ENCODE measurements at regions of chr12 and their contacts with region 1.

Region 1: GRCh38 chr12:3073438-3074250 is 3.5 kb upstream of the TSPAN9 start:
- DNase-seq: peak; percentile 79 to 95 (median 85)
- H3K4me3 ChIP-seq: no peak overlapping the region
- H3K27ac ChIP-seq: peak overlapping the region in 1 of 5 donors; percentile 17
- H3K4me1 ChIP-seq: peaks cover 5 to 16% of the 10 kb centered on the region in 2 donors
- H3K27me3 ChIP-seq: no peaks in the 10 kb centered on the region
- CTCF ChIP-seq: peak; percentile 93 to 99 (median 96)
- POLR2A ChIP-seq: no peak

Region 2: DNA sequence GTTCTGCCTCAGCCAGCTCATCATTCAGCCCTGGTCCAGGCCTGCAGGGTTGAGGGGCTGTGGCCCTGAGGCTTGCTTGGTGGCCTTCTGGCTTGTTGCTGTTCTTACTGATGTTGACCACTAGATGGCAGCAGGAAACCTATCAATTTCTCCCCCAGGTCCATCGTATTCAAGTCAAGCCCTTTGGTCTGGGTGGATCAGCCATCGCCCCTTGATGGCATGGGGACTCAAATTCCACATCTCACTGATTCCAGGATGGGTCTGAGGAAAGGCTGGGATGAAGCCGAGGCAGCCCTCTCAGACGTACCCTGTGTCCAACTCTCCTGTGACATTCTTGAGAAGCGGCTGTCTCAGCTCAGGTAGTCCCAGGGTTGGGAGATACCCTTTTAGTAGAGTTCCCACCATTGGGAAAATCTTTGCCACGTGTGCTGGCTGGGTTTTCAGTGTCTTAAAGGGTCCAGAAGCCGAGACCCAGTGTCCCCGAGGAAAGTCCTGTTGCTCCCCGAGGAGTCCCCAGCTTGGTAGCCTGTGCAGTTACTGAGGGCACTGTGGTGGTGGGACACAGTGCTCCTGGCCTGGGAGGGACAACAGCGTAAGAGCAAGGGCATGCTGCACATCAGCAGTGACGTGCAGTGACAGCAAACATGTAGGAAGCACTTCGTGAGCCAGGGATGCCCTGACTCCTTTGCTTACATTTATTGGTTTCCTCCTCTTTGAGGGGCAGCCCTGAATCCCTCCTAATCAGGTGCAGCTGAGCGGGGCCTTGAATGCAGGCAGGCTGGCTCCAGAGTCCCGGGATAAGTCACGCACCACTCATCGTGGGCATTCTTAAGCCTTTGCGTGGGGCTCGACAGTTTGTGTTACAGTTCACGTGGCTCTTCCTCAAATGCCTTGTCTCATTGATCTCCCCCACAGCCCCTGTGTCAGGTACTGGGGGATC is 62.1 kb after region 1 on chr12:
- intact Hi-C with region 1: loop called (anchors 5 to 10 kb)
- DNase-seq: peak; percentile 28 to 76 (median 47)
- H3K4me3 ChIP-seq: no peak overlapping the region
- H3K27ac ChIP-seq: no peak overlapping the region
- H3K4me1 ChIP-seq: peaks cover 0 to under 1% of the 10 kb centered on the region in 2 donors
- H3K27me3 ChIP-seq: no peaks in the 10 kb centered on the region
- CTCF ChIP-seq: peak; percentile 68 to 89 (median 81)
- POLR2A ChIP-seq: no peak

Region 3: GRCh38 chr12:3313675-3314663 is 240.3 kb after region 1 on chr12:
- intact Hi-C with region 1: no loop called
- DNase-seq: peak in 2 of 7 donors; percentile 16 to 28
- H3K4me3 ChIP-seq: no peak overlapping the region
- H3K27ac ChIP-seq: no peak overlapping the region
- H3K4me1 ChIP-seq: no peaks in the 10 kb centered on the region
- H3K27me3 ChIP-seq: no peaks in the 10 kb centered on the region
- CTCF ChIP-seq: peak in 4 of 6 experiments; percentile 12 to 29 (median 27)
- POLR2A ChIP-seq: no peak

Region 4: DNA sequence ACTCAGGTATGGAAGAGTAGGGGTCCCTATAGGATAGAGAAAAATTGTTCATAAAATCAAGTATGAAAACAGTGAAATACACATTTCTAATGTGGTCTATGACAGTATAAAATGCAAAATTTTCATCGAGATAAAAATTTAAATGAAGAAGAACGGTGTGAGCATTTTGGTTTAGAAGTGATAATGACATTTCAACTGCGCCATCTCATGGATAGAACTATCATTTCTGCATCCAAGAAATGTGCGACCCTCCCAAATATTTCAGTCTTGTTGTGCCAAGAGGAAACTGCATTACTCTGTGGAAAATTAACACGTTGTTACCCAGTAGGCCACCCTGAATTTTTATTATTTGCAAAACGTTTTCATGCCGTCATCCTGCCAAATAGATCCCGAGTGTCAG is 570.5 kb after region 1 on chr12:
- intact Hi-C with region 1: no loop called
- DNase-seq: no peak
- H3K4me3 ChIP-seq: no peak overlapping the region
- H3K27ac ChIP-seq: no peak overlapping the region
- H3K4me1 ChIP-seq: no peaks in the 10 kb centered on the region
- H3K27me3 ChIP-seq: no peaks in the 10 kb centered on the region
- CTCF ChIP-seq: no peak
- POLR2A ChIP-seq: no peak